Posterior cingulate gyrus (tissue), 11 donors: ENCODE measurements at regions of chr16 and their contacts with region 1.

Region 1: DNA sequence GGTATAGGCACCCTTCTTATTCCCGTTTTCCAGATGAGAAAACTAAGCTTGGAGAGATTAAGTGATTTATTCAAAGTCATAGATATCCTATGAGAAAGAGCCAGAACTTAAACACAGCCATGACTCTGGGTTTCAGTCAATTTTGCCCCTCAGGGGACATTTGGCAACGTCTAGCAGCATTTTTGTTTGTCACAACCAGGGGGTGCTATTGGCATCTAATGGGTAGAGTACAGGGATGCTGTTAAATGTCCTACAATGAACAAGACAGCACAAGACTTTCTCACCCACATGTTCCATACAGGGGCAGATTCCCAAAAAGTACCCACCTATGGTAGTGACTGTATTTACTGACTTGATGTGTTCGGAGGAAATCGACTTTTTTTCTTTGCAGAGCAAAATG is 4.8 kb upstream of the SHISA9 start:
- DNase-seq: no peak

Region 2: GRCh38 chr16:13021996-13022395 is 125.4 kb after region 1 on chr16:
- intact Hi-C with region 1: no loop called
- DNase-seq: peak in 2 of 10 donors; percentile 7 to 82

Region 3: DNA sequence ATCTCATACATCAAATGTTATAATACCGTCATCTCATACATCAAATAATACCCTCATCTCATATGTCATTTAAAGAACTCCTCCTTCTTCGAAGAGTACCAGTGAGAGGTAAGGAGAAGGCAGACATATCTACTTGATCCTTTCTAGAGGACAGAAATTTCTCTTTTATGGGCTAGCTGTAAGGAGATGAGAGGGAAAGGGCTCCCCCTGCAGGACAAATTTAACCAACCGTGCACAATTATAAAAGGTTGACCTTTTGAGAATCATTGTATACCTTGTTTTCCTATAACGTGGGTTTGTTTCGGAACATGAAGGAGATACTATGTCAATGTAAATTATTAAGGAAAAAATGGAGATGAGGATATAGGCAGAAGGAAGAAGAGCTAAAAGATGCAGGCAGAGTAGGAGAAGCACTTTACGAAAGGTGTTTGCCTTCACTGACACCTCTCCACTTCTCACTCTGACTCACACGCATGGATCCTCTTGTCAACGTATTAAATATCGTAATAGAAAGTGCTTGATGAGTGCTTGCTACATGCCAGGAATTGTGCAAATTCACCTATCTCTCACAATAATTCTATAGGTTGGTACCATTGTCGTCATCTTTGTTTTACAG is 557.5 kb after region 1 on chr16:
- intact Hi-C with region 1: loop called (anchors 5 kb)
- DNase-seq: peak in 6 of 10 donors; percentile 17 to 87 (median 29)